CD4-positive, alpha-beta memory T cell (primary cell): ENCODE measurements at regions of chr2 and their contacts with region 1.

Region 1: DNA sequence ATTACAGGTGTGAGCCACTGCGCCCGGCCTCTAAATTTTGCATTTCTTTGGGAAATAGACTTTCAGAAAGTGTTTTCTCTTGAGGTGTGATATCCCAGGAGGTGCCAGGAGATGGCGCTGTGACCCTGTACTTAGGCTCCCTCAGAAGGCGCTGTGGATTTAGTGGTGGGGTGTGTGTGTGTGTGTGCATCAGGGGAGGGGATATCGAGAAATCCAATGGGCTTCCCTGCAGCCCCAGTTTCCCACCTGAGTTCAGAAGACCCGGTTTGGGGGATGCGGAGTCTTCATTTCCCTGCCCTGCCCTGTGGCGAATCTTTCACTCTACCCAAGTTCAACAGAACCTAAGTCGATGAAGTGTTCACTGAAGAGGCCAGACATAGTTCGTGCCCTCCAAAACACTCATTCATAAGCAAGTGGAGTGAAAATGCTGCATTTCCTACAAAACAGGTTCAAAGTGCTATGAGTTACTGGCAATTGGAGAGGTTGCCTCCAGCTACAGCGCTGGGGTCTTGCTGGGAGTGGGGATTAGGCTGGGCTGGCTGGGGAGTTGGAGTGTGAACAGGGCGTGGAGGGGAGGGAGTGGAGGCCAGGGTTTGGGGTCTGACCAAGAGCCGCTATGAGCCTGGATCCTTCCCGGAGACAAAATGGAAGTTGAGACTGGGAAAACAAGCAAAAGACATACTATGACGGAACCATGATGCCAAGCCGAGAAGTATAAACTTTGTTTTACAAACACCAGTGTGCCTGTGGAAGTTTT is 6.5 kb upstream of the WNT6 start:
- DNase-seq: peak; percentile 58 to 67 (median 62)
- H3K4me3 ChIP-seq: no peak overlapping the region
- H3K4me3 Mint-ChIP-seq: peak overlapping the region in 1 of 8 donors; percentile 31
- H3K27ac ChIP-seq: no peak overlapping the region
- H3K27ac Mint-ChIP-seq: peak overlapping the region in 2 of 7 donors; percentile 57 to 70
- H3K4me1 ChIP-seq: no peaks in the 10 kb centered on the region
- H3K4me1 Mint-ChIP-seq: peaks cover 0 to 9% (median 4%) of the 10 kb centered on the region in 4 donors
- H3K27me3 ChIP-seq: peaks cover 15% of the 10 kb centered on the region
- H3K27me3 Mint-ChIP-seq: peaks cover 33 to 52% of the 10 kb centered on the region in 2 donors

Region 2: DNA sequence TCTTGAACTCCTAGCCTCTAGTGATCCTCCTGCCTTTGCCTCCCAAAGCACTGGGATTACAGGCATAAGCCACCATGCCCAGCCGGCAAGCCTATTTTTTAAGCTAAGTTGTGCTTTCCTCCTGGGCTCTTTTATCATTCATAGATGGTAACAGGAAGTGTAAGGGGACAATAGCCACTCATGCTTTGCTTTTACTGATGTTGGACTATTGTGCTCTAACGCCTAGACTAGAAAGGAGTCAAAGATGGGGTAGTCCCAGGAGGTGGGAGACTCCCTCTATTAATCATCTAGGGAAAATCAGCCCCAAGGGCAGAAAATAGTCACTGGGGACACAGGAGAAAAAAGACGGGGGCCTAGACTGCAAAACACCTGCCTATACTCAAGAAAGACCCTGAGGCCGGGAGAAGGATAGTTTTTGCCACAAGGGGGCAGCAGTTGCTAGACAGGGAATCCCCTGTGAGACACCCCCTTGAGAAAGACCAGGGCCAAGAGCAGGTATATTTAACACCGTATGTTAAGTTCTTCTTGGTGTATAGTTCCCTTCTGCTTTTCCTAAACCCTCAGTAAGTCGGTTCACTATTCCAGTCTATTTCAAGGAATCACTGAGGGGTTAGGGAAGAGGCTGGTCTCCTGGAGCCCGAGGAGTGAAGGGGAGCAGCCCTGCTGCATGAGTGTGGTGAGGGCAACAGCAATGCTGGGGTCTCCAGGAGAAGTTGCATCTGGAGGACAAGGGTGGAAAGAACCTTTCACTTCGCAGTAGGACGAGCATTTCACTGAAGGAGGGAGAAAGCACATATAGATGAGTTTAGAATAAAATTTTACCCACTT is 684.2 kb before region 1 on chr2:
- CTCF ChIA-PET with region 1: no interaction called
- POLR2A ChIA-PET with region 1: no interaction called
- intact Hi-C with region 1: loop called (anchors 5 kb)
- DNase-seq: peak; percentile 47 to 65 (median 52)
- H3K4me3 ChIP-seq: no peak overlapping the region
- H3K4me3 Mint-ChIP-seq: peak overlapping the region in 1 of 8 donors; percentile 26
- H3K27ac ChIP-seq: no peak overlapping the region
- H3K27ac Mint-ChIP-seq: peak overlapping the region in 4 of 7 donors; percentile 10 to 67 (median 38)
- H3K4me1 ChIP-seq: peaks cover 30% of the 10 kb centered on the region
- H3K4me1 Mint-ChIP-seq: peaks cover 19 to 41% (median 30%) of the 10 kb centered on the region in 4 donors
- H3K27me3 ChIP-seq: no peaks in the 10 kb centered on the region
- H3K27me3 Mint-ChIP-seq: peaks cover 2 to 6% of the 10 kb centered on the region in 2 donors

Region 3: GRCh38 chr2:218568190-218569037 is 284.7 kb before region 1 on chr2 and contains the starts of genes CNOT9 and USP37:
- CTCF ChIA-PET with region 1: no interaction called
- POLR2A ChIA-PET with region 1: no interaction called
- intact Hi-C with region 1: loop called (anchors 5 kb)
- DNase-seq: peak; percentile 99 to 100 (median 100)
- H3K4me3 ChIP-seq: peak within 1 kb of the TSS; percentile 67 to 84
- H3K4me3 Mint-ChIP-seq: peak within 1 kb of the TSS; percentile 90 to 99 (median 97)
- H3K27ac ChIP-seq: peak within 1 kb of the TSS; percentile 99
- H3K27ac Mint-ChIP-seq: peak within 1 kb of the TSS; percentile 96 to 100 (median 100)
- H3K4me1 ChIP-seq: peaks cover 43% of the 10 kb centered on the region
- H3K4me1 Mint-ChIP-seq: peaks cover 48 to 78% (median 57%) of the 10 kb centered on the region in 4 donors
- H3K27me3 ChIP-seq: no peaks in the 10 kb centered on the region
- H3K27me3 Mint-ChIP-seq: no peaks in the 10 kb centered on the region
- total RNA-seq, gene CNOT9: 53.9 to 58.0 TPM
- total RNA-seq, gene USP37: 28.2 to 29.1 TPM

Region 4: GRCh38 chr2:218710687-218711549 is 142.2 kb before region 1 on chr2 and contains the start of gene TTLL4:
- CTCF ChIA-PET with region 1: interaction called, 14 read pairs
- POLR2A ChIA-PET with region 1: no interaction called
- intact Hi-C with region 1: no loop called
- DNase-seq: peak; percentile 98 to 99 (median 99)
- H3K4me3 ChIP-seq: peak within 1 kb of the TSS; percentile 55 to 78
- H3K4me3 Mint-ChIP-seq: peak within 1 kb of the TSS; percentile 88 to 98 (median 95)
- H3K27ac ChIP-seq: peak within 1 kb of the TSS; percentile 81
- H3K27ac Mint-ChIP-seq: peak within 1 kb of the TSS; percentile 79 to 96 (median 93)
- H3K4me1 ChIP-seq: peaks cover 16% of the 10 kb centered on the region
- H3K4me1 Mint-ChIP-seq: peaks cover 14 to 26% (median 18%) of the 10 kb centered on the region in 4 donors
- H3K27me3 ChIP-seq: no peaks in the 10 kb centered on the region
- H3K27me3 Mint-ChIP-seq: peaks cover 0 to under 1% of the 10 kb centered on the region in 2 donors
- total RNA-seq, gene TTLL4: 23.1 to 26.1 TPM

Region 5: GRCh38 chr2:218876562-218877219 is 23.6 kb after region 1 on chr2:
- CTCF ChIA-PET with region 1: interaction called, 91 read pairs
- POLR2A ChIA-PET with region 1: no interaction called
- intact Hi-C with region 1: loop called (anchors 1 kb)
- DNase-seq: peak; percentile 72 to 83 (median 76)
- H3K4me3 ChIP-seq: no peak overlapping the region
- H3K4me3 Mint-ChIP-seq: peak overlapping the region in 3 of 8 donors; percentile 15 to 62 (median 29)
- H3K27ac ChIP-seq: no peak overlapping the region
- H3K27ac Mint-ChIP-seq: peak overlapping the region; percentile 32 to 86 (median 65)
- H3K4me1 ChIP-seq: peaks cover 55% of the 10 kb centered on the region
- H3K4me1 Mint-ChIP-seq: peaks cover 29 to 61% (median 41%) of the 10 kb centered on the region in 4 donors
- H3K27me3 ChIP-seq: peaks cover 26% of the 10 kb centered on the region
- H3K27me3 Mint-ChIP-seq: peaks cover 22 to 30% of the 10 kb centered on the region in 2 donors

Region 6: DNA sequence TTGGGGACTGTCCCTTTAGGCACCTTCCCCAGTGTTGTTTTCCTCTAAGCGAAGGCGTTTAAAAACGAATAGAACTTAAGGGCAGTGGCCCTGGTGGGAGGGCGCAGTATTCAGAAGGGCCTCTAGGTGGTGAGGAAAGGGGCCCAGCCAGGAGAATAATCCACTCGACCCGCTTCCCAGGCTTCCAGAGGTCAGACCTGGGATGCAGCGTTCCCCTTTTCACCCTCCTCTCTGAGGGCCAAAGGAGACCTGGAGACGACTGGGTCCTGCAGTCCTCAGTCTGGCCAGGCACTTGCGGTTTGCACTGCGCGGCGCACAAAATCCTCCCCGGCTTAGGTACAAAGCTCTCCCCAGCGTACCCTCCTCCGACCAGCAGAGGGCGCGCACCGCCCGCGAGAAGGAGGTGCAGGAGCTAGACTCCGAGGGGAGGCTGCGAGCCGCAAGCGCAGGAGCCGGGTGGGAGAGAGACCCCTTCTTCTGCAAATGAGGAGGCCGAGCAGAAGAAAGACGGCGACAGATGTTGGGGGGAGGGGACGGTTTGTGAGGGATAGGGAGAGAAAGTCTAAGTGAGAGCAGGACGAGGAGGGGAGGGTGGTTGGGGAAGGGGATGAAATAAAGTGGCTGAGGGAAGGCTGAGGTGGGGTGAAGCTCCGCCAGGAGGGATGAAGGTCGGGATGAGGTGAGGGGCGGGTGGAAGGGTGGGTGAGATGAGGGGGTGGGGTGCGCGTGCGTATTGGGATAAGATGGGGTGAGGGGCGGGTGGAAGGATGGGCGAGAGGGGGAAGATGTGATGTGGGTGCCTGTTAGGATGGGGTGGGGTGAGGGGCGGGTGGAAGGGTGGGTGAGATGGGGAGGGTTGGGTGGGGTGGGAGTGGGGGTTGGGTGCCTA is 127.0 kb after region 1 on chr2:
- CTCF ChIA-PET with region 1: interaction called, 3 read pairs
- POLR2A ChIA-PET with region 1: no interaction called
- intact Hi-C with region 1: loop called (anchors 1 kb)
- DNase-seq: peak; percentile 80 to 84 (median 83)
- H3K4me3 ChIP-seq: peak overlapping the region in 1 of 2 donors; percentile 27
- H3K4me3 Mint-ChIP-seq: peak overlapping the region; percentile 54 to 93 (median 80)
- H3K27ac ChIP-seq: no peak overlapping the region
- H3K27ac Mint-ChIP-seq: peak overlapping the region in 3 of 7 donors; percentile 10 to 64 (median 12)
- H3K4me1 ChIP-seq: peaks cover 41% of the 10 kb centered on the region
- H3K4me1 Mint-ChIP-seq: peaks cover 14 to 45% (median 22%) of the 10 kb centered on the region in 4 donors
- H3K27me3 ChIP-seq: peaks cover 37% of the 10 kb centered on the region
- H3K27me3 Mint-ChIP-seq: peaks cover 63 to 69% of the 10 kb centered on the region in 2 donors

Region 7: GRCh38 chr2:219119422-219120043 is 266.4 kb after region 1 on chr2:
- CTCF ChIA-PET with region 1: no interaction called
- POLR2A ChIA-PET with region 1: no interaction called
- intact Hi-C with region 1: loop called (anchors 2 kb)
- DNase-seq: peak; percentile 27 to 42 (median 37)
- H3K4me3 ChIP-seq: no peak overlapping the region
- H3K4me3 Mint-ChIP-seq: no peak overlapping the region
- H3K27ac ChIP-seq: no peak overlapping the region
- H3K27ac Mint-ChIP-seq: no peak overlapping the region
- H3K4me1 ChIP-seq: peaks cover 5% of the 10 kb centered on the region
- H3K4me1 Mint-ChIP-seq: peaks cover 7 to 11% (median 8%) of the 10 kb centered on the region in 4 donors
- H3K27me3 ChIP-seq: no peaks in the 10 kb centered on the region
- H3K27me3 Mint-ChIP-seq: no peaks in the 10 kb centered on the region